H1 (cell line): ENCODE measurements at regions of chr6 and their contacts with region 1.

Region 1: DNA sequence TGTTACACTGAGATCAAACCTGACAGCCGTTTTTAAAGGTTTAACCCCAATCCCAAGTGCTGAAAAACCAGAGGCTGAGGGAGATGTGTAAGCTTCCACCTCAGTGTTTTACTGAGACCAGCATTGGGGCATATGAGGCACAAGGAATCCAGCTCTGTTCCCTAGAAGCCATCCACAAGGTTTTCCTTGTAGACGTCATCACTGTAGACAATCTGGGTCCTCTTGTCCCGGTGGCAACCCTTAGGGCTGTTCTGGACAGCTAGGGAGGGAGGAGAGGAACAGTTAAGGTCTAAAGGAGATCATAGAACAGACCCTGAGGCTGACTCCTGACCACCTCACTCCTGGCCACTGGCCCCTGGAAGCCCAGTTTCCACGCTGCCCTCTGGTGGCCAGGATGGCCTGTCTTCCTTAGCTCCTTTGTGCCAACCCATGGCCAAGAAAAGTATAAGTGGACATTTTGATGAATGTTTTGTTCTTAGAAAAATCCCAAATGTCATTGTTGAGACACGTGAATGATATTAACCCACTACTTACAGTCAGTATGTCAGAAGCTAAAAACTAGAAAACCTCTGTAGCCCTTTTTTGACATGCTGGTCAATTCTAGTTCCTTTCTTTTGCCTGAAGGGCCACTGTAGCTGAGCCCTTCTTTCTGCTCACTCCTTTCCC is 6.4 kb downstream of the CFB start:
- DNase-seq: peak in 1 of 2 experiments; percentile 76
- H3K4me3 ChIP-seq: no peak overlapping the region
- H3K27ac ChIP-seq: no peak overlapping the region
- H3K4me1 ChIP-seq: 0 out of 7 replicates have a peak, but pooled peaks cover 0 to 2% (median 0%) of the 10 kb centered on the region in 4 experiments
- H3K27me3 ChIP-seq: peaks cover 0 to 3% (median 1%) of the 10 kb centered on the region in 4 experiments; a peak in 2 of 7 replicates
- CTCF ChIP-seq: peak; percentile 84 to 89 (median 88)
- EP300 ChIP-seq: no peak
- POLR2A ChIP-seq: no peak
- RAD21 ChIP-seq: peak; percentile 66 to 74

Region 2: DNA sequence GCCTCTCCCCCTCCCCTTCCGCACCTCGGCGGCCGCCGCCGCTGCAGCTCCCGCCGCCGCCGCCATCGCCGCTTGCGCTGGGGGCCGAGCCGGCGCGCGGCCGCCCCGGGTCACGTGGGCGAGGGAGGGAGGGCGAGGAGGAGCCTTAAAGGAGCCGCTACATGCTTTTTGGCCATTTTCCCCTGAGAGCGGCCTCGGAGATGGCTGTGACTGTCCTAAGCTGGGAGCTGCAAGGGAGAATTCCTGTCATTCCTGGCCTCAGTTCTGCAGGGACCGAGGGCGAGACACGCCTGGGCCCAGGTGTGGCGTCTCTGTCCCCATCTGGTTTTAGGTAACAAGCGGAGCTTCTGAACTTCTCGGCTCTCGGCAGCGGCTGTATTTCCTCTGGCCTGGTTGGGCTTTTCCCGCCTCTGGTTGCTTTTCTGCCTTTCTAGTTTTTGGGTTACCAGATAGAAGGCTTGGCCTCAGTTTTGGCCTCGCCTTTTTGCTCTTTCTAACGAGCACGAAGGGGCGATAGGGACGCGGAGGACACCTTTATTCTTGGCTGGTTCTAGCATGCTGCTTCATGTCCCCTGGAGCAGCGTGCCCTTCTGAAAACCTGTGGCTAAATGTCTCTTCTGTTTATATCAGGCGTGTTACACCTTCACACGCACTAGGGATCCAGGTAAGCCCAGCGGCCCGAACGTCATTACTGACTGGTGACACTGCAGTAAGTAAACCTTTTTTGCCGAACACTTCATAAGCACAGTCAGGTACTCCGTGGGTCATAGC is 54.5 kb before region 1 on chr6 and contains the start of gene EHMT2:
- CTCF ChIA-PET with region 1: interaction called, 11 read pairs
- POLR2A ChIA-PET with region 1: interaction called, 11 read pairs
- DNase-seq: peak in 1 of 2 experiments; percentile 89
- H3K4me3 ChIP-seq: peak within 1 kb of the TSS; percentile 74 to 97 (median 82)
- H3K27ac ChIP-seq: peak within 1 kb of the TSS; percentile 55; the same call in 1 of the 2 replicates
- H3K4me1 ChIP-seq: peaks cover 0 to 14% (median 6%) of the 10 kb centered on the region in 4 experiments; a peak in 6 of 7 replicates
- H3K27me3 ChIP-seq: no peaks in the 10 kb centered on the region
- CTCF ChIP-seq: no peak
- EP300 ChIP-seq: no peak
- POLR2A ChIP-seq: peak; percentile 72 to 84
- RAD21 ChIP-seq: no peak
- total RNA-seq, gene EHMT2: 177 and 183 TPM in 2 replicates

Region 3: DNA sequence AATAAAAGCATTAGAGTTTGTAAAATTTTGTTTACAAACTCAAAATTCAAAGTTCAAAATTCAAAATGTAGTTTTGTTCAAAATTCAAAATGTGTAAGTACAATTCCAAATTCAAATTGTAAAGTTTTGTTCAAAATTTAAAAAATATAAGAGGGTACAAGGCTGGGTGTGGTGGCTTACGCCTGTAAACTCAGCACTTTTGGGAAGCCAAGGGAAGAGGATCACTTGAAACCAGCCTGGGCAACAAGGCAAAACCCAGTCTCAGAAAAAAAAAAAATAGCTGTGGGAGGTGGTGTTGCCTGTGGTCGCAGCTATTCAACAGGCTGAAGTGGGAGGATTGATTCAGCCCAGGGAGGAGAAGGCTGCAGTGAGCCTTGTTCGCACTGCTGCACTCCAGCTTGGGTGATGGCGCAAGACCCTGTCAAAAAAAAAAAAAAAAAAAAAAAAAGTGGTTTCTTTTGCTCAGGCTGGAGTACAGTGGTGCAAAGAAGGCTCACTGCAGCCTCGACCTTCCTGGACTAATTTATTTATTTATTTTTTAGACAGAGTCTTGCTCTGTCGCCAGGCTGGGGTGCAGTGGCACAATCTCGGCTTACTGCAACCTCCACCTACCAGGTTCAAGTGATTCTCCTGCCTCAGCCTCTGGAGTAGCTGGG is 45.0 kb before region 1 on chr6:
- CTCF ChIA-PET with region 1: interaction called, 10 read pairs
- POLR2A ChIA-PET with region 1: interaction called, 10 read pairs
- DNase-seq: no peak
- H3K4me3 ChIP-seq: no peak overlapping the region
- H3K27ac ChIP-seq: no peak overlapping the region
- H3K4me1 ChIP-seq: peaks cover 0 to 10% (median 5%) of the 10 kb centered on the region in 4 experiments; a peak in 5 of 7 replicates
- H3K27me3 ChIP-seq: no peaks in the 10 kb centered on the region
- CTCF ChIP-seq: no peak
- EP300 ChIP-seq: no peak
- POLR2A ChIP-seq: no peak
- RAD21 ChIP-seq: no peak

Region 4: DNA sequence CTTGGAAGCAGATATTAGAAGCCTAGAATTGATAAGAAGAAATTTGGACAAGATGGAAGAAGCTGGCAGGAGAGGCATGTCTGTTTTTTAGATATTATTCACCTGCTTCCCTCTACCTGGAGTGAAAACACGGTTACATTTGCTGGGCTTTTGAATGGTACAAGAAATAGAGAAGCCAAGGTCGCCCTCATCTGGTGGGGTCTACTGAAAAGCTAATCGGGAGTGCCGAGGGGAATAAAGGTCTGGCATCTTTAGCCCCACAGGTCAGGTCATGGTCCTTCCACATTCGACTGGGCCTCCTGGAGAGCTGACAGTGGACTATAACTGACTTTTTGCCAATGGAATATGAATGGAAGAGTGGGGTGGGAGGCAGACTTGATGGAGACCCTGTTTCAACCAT is 29.3 kb before region 1 on chr6:
- CTCF ChIA-PET with region 1: interaction called, 43 read pairs
- POLR2A ChIA-PET with region 1: interaction called, 4 read pairs
- DNase-seq: no peak
- H3K4me3 ChIP-seq: no peak overlapping the region
- H3K27ac ChIP-seq: no peak overlapping the region
- H3K4me1 ChIP-seq: no peaks in the 10 kb centered on the region
- H3K27me3 ChIP-seq: no peaks in the 10 kb centered on the region
- CTCF ChIP-seq: peak; percentile 32 to 57 (median 55)
- EP300 ChIP-seq: no peak
- POLR2A ChIP-seq: no peak
- RAD21 ChIP-seq: peak; percentile 68 to 76

Region 5: GRCh38 chr6:31928672-31928939 is 23.7 kb before region 1 on chr6:
- CTCF ChIA-PET with region 1: interaction called, 43 read pairs
- POLR2A ChIA-PET with region 1: interaction called, 4 read pairs
- DNase-seq: no peak
- H3K4me3 ChIP-seq: no peak overlapping the region
- H3K27ac ChIP-seq: no peak overlapping the region
- H3K4me1 ChIP-seq: no peaks in the 10 kb centered on the region
- H3K27me3 ChIP-seq: no peaks in the 10 kb centered on the region
- CTCF ChIP-seq: no peak
- EP300 ChIP-seq: no peak
- POLR2A ChIP-seq: no peak
- RAD21 ChIP-seq: no peak

Region 6: DNA sequence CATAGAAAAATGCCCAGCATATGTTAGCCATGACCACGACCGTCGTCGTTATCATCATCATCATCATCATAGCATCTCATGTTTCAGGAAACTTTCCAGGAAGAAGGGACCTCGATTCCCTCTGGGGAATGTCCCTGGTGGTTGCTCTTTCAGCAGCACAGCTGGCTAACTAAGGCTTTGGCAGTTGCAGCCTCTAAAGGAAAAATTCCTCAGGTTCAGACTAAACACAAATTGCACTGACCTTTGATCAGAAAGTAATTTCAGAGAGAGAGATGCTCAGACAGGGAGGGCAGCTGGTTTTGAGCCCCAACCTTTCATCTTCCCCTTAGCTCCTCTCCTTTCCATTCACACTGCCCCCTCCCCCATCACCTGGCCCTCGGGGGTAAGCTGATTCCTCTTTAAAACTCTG is 12.0 kb before region 1 on chr6:
- CTCF ChIA-PET with region 1: interaction called, 53 read pairs
- POLR2A ChIA-PET with region 1: interaction called, 47 read pairs
- DNase-seq: no peak
- H3K4me3 ChIP-seq: no peak overlapping the region
- H3K27ac ChIP-seq: no peak overlapping the region
- H3K4me1 ChIP-seq: 0 out of 7 replicates have a peak, but pooled peaks cover 0 to 2% (median 0%) of the 10 kb centered on the region in 4 experiments
- H3K27me3 ChIP-seq: peaks cover 0 to 6% (median 0%) of the 10 kb centered on the region in 4 experiments; a peak in 1 of 7 replicates
- CTCF ChIP-seq: no peak
- EP300 ChIP-seq: no peak
- POLR2A ChIP-seq: no peak
- RAD21 ChIP-seq: no peak

Region 7: DNA sequence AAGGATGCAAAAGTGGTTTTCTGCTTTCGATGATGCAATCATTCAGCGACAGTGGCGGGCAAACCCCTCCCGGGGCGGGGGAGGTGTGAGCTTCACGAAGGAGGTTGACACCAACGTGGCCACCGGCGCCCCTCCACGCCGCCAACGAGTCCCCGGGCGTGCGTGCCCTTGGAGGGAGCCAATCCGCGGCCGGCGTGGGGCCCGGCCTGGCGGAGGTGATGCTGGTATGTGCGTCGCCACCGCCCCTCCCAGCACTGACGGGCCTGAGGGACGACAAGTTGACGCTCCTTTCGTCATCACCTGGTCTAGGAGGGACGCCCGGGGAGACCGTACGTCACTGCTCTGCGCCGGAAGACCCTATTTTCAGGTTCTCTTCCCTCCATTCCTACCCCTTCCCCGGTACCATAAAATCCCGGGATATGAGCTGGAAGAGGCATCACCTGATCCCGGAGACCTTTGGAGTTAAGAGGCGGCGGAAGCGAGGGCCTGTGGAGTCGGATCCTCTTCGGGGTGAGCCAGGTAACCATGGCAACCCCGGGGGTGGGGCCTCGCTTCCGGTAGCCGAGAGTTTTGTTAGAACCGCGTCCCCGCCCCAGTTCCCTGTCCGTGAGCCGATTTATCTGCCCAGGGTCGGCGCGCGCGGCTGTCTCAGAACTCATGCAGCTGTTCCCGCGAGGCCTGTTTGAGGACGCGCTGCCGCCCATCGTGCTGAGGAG is 19.9 kb after region 1 on chr6 and contains the start of gene DXO:
- CTCF ChIA-PET with region 1: interaction called, 84 read pairs
- POLR2A ChIA-PET with region 1: interaction called, 279 read pairs
- DNase-seq: peak; percentile 80 to 98
- H3K4me3 ChIP-seq: peak within 1 kb of the TSS; percentile 68 to 94 (median 84)
- H3K27ac ChIP-seq: peak within 1 kb of the TSS; percentile 90
- H3K4me1 ChIP-seq: peaks cover 0 to 9% (median 5%) of the 10 kb centered on the region in 4 experiments; a peak in 5 of 7 replicates
- H3K27me3 ChIP-seq: no peaks in the 10 kb centered on the region; a peak in 1 of 7 replicates
- CTCF ChIP-seq: no peak
- EP300 ChIP-seq: no peak
- POLR2A ChIP-seq: peak in 1 of 2 experiments; percentile 79; a peak in 2 of 3 replicates
- RAD21 ChIP-seq: no peak
- total RNA-seq, gene DXO: 14.7 and 16.2 TPM in 2 replicates